ENCODE measurements at regions of chr7 and their contacts with region 1.

Region 1: GRCh38 chr7:50418086-50418515 is 32.0 kb downstream of the FIGNL1 start:
- DNase-seq: peak; percentile 77
- H3K4me3 ChIP-seq: no peak overlapping the region
- H3K27ac ChIP-seq: no peak overlapping the region
- H3K4me1 ChIP-seq: peaks cover 12% of the 10 kb centered on the region
- H3K27me3 ChIP-seq: peaks cover 0 to 8% of the 10 kb centered on the region in 2 experiments
- CTCF ChIP-seq: peak; percentile 89 to 94
- POLR2A ChIP-seq: no peak

Region 2: GRCh38 chr7:50092579-50093491 is 325.3 kb before region 1 on chr7 and contains the start of gene ZPBP:
- CTCF ChIA-PET with region 1: interaction called, 6 read pairs
- POLR2A ChIA-PET with region 1: no interaction called
- dilution Hi-C with region 1: no loop called
- intact Hi-C with region 1: loop called (anchors 1 kb)
- DNase-seq: peak; percentile 40
- H3K4me3 ChIP-seq: peak within 1 kb of the TSS in 1 of 3 experiments; percentile 23
- H3K27ac ChIP-seq: no peak within 1 kb of the TSS
- H3K4me1 ChIP-seq: peaks cover 3% of the 10 kb centered on the region
- H3K27me3 ChIP-seq: no peaks in the 10 kb centered on the region
- CTCF ChIP-seq: peak; percentile 48 to 49
- POLR2A ChIP-seq: no peak
- total RNA-seq, gene ZPBP: not detected in 2 replicates

Region 3: DNA sequence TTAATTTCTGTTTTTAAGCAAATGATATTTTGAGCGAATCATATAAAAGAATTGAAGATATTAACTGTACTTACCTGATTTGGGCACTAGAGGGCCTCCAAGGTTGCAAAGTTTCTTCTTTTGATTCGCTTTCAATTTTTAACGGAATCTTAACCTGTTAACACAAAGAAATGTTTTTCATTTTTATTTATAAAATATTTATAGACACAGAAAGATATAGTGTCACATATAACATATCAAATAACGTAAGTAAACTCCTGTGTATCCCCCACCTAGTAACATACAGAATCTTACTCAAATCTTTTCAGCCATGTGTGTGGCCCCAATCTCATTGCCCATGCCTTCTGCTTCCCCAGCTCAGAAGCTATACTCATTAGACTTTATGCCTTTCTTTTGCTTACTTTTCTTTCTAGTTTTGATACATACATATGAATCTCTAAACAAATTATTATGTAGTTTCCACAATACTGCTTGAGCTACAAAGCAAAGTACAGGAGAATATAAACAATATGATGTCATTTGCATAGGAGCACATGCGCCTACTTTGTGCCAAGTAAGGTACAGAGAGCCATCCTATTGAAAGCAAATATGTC is 275.6 kb before region 1 on chr7:
- CTCF ChIA-PET with region 1: interaction called, 4 read pairs
- POLR2A ChIA-PET with region 1: no interaction called
- dilution Hi-C with region 1: no loop called
- intact Hi-C with region 1: loop called (anchors 1 kb)
- DNase-seq: peak; percentile 44
- H3K4me3 ChIP-seq: no peak overlapping the region
- H3K27ac ChIP-seq: no peak overlapping the region
- H3K4me1 ChIP-seq: no peaks in the 10 kb centered on the region
- H3K27me3 ChIP-seq: no peaks in the 10 kb centered on the region
- CTCF ChIP-seq: peak; percentile 26 to 49
- POLR2A ChIP-seq: no peak

Region 4: GRCh38 chr7:50206453-50207250 is 211.4 kb before region 1 on chr7:
- CTCF ChIA-PET with region 1: interaction called, 49 read pairs
- POLR2A ChIA-PET with region 1: no interaction called
- dilution Hi-C with region 1: no loop called
- intact Hi-C with region 1: loop called (anchors 1 kb)
- DNase-seq: no peak
- H3K4me3 ChIP-seq: no peak overlapping the region
- H3K27ac ChIP-seq: no peak overlapping the region
- H3K4me1 ChIP-seq: no peaks in the 10 kb centered on the region
- H3K27me3 ChIP-seq: no peaks in the 10 kb centered on the region
- CTCF ChIP-seq: no peak
- POLR2A ChIP-seq: no peak

Region 5: GRCh38 chr7:50428911-50429310 is 10.8 kb after region 1 on chr7:
- CTCF ChIA-PET with region 1: interaction called, 14 read pairs
- POLR2A ChIA-PET with region 1: no interaction called
- dilution Hi-C with region 1: no loop called
- intact Hi-C with region 1: no loop called
- DNase-seq: no peak
- H3K4me3 ChIP-seq: no peak overlapping the region
- H3K27ac ChIP-seq: no peak overlapping the region
- H3K4me1 ChIP-seq: no peaks in the 10 kb centered on the region
- H3K27me3 ChIP-seq: no peaks in the 10 kb centered on the region
- CTCF ChIP-seq: no peak
- POLR2A ChIP-seq: no peak

Region 6: GRCh38 chr7:50449881-50450589 is 31.9 kb after region 1 on chr7 and contains the start of gene FIGNL1:
- CTCF ChIA-PET with region 1: interaction called, 3 read pairs
- POLR2A ChIA-PET with region 1: no interaction called
- dilution Hi-C with region 1: no loop called
- intact Hi-C with region 1: loop called (anchors 1 kb)
- DNase-seq: peak; percentile 78
- H3K4me3 ChIP-seq: peak within 1 kb of the TSS; percentile 44 to 98 (median 64)
- H3K27ac ChIP-seq: peak within 1 kb of the TSS; percentile 66
- H3K4me1 ChIP-seq: peaks cover 38% of the 10 kb centered on the region
- H3K27me3 ChIP-seq: peaks cover 0 to 5% of the 10 kb centered on the region in 2 experiments
- CTCF ChIP-seq: no peak
- POLR2A ChIP-seq: peak; percentile 79
- total RNA-seq, gene FIGNL1: 37.2 and 49.3 TPM in 2 replicates

Measured in endothelial cell of umbilical vein (primary cell).